Activated T-helper 1 cell treated with anti-CD3 and anti-CD28 coated beads, Interleukin-12 subunit alpha, Interleukin-12 subunit beta, Interleukin-2, Interleukin-4 antibody, amounts not matched to agents 30 ng/mL and 10 ng/mL and 1 ng/mL, durations not matched to agents 14 hours and 24 hours and 36 hours (primary cell): ENCODE measurements at regions of chr2 and their contacts with region 1.

Region 1: DNA sequence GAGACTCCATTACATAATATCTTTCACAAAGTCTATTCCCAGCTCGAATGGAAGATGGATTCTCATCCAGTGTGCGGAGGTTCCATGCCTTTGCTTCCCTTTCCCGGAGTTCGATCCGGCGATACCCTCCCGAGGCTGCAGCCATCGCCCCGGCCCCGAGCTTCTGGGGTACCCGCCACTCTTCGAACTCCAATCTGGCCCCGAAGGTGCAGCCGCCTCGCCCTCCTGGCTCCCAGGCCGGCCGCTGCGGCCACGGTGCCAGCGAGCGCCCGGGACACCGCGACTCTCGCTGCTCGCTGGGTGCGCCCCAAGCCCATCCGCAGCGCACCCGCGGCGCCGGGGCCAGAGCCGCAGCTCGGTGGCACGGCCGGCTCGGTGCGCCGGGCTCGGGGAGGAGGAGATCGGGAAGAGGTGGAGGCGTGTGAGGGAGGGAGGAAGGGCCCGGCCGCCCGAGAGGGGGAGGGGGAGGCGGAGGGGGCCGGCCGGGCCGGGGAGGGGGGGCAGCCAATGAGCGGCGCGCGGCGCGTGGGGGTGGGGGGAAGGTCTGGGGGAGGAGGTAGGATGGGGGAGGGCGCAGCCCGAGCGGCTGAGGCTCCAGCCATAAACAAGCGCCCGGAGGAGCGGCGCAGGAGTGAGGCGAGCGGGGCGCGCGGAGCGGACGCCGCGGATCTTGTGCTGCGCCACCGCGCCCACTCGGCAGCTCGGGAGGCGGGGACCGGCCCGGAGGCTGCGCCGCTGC is at the start of gene CRIM1:
- DNase-seq: peak; percentile 42
- H3K4me3 Mint-ChIP-seq: peak within 1 kb of the TSS; percentile 80
- H3K27ac Mint-ChIP-seq: peak within 1 kb of the TSS; percentile 57
- H3K4me1 Mint-ChIP-seq: peaks cover 44% of the 10 kb centered on the region
- H3K27me3 Mint-ChIP-seq: peaks cover 59% of the 10 kb centered on the region
- total RNA-seq, gene CRIM1: 15.3 and 17.6 TPM in 2 replicates

Region 2: GRCh38 chr2:36147670-36148390 is 207.5 kb before region 1 on chr2:
- intact Hi-C with region 1: loop called (anchors 1 kb)
- DNase-seq: no peak
- H3K4me3 Mint-ChIP-seq: peak overlapping the region; percentile 19
- H3K27ac Mint-ChIP-seq: peak overlapping the region; percentile 49
- H3K4me1 Mint-ChIP-seq: peaks cover 26% of the 10 kb centered on the region
- H3K27me3 Mint-ChIP-seq: peaks cover 17% of the 10 kb centered on the region

Region 3: GRCh38 chr2:36333350-36333972 is 21.9 kb before region 1 on chr2:
- intact Hi-C with region 1: no loop called
- DNase-seq: no peak
- H3K4me3 Mint-ChIP-seq: no peak overlapping the region
- H3K27ac Mint-ChIP-seq: no peak overlapping the region
- H3K4me1 Mint-ChIP-seq: peaks cover 10% of the 10 kb centered on the region
- H3K27me3 Mint-ChIP-seq: peaks cover 13% of the 10 kb centered on the region

Region 4: GRCh38 chr2:36373149-36373926 is 18.0 kb after region 1 on chr2:
- intact Hi-C with region 1: no loop called
- DNase-seq: no peak
- H3K4me3 Mint-ChIP-seq: peak overlapping the region; percentile 6
- H3K27ac Mint-ChIP-seq: no peak overlapping the region
- H3K4me1 Mint-ChIP-seq: peaks cover 39% of the 10 kb centered on the region
- H3K27me3 Mint-ChIP-seq: peaks cover 6% of the 10 kb centered on the region

Region 5: DNA sequence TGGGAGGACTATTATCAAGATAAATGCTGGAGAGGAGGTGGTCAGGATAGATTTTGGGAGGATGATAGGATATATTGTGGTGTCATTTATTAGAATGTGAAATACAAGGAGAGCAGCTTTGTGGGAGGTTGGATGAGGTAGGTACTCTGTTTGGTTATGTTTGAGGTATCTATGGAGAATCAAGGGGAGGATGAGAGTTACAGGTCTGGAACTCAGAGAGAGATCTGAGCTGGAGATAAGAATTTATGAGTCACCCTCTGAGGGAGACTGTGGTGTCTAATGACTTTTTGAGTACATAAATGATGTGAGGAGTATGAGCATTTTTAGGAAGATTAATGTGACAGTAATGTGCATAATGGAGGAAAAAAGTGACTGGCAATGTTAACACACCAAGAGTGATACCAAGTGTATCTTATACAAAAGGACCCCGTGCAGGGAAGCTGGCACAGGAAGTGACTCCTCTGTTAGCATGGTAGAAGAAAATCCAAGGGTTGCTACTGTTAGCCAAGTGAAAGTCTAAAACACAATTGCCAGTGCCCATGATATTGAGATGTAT is 48.4 kb after region 1 on chr2:
- intact Hi-C with region 1: loop called (anchors 5 kb)
- DNase-seq: no peak
- H3K4me3 Mint-ChIP-seq: no peak overlapping the region
- H3K27ac Mint-ChIP-seq: no peak overlapping the region
- H3K4me1 Mint-ChIP-seq: no peaks in the 10 kb centered on the region
- H3K27me3 Mint-ChIP-seq: peaks cover 5% of the 10 kb centered on the region

Region 6: GRCh38 chr2:36507408-36507812 is 152.1 kb after region 1 on chr2:
- intact Hi-C with region 1: loop called (anchors 1 kb)
- DNase-seq: no peak
- H3K4me3 Mint-ChIP-seq: no peak overlapping the region
- H3K27ac Mint-ChIP-seq: no peak overlapping the region
- H3K4me1 Mint-ChIP-seq: no peaks in the 10 kb centered on the region
- H3K27me3 Mint-ChIP-seq: no peaks in the 10 kb centered on the region

Region 7: DNA sequence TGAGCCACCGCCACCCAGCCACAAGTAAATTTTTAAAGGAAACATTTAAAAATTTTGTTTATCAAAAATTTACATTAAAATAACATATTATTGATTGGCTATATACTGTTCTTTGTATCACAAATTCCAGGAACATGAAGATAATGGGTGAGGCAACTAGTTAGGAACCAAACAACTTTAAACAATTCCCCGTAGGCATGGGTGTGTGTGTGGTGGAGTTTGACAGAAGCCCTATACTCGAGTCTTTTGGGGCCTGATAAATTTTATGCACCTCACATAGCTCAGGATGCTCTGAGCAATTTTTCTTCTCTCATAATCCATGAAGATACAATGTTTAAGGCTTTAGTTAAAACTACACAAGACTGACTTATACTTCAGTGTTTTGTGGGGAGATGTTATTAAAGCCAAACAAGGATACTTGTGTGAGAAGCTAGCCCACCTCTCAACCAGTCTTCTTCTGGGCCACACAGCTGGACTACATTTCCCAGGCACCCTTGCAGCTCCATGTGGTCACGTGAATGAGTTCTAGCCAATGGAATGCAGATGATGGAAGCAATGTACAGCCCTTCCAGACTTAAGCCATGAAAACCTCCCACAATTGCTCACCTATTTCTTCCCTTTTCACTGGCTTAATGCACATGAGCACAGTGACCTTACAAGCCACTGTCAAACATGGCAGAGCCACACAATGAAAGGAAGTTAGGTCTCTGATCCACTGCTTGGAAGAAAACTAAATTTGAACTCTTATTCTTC is 262.9 kb after region 1 on chr2:
- intact Hi-C with region 1: no loop called
- DNase-seq: no peak
- H3K4me3 Mint-ChIP-seq: no peak overlapping the region
- H3K27ac Mint-ChIP-seq: no peak overlapping the region
- H3K4me1 Mint-ChIP-seq: no peaks in the 10 kb centered on the region
- H3K27me3 Mint-ChIP-seq: peaks cover 10% of the 10 kb centered on the region

Region 8: GRCh38 chr2:36663851-36664695 is 308.8 kb after region 1 on chr2:
- intact Hi-C with region 1: loop called (anchors 1 kb)
- DNase-seq: no peak
- H3K4me3 Mint-ChIP-seq: no peak overlapping the region
- H3K27ac Mint-ChIP-seq: no peak overlapping the region
- H3K4me1 Mint-ChIP-seq: no peaks in the 10 kb centered on the region
- H3K27me3 Mint-ChIP-seq: peaks cover 5% of the 10 kb centered on the region

Region 9: GRCh38 chr2:36966370-36967235 is 611.3 kb after region 1 on chr2 and contains the start of gene STRN:
- intact Hi-C with region 1: loop called (anchors 2 kb)
- DNase-seq: peak; percentile 99
- H3K4me3 Mint-ChIP-seq: peak within 1 kb of the TSS; percentile 95
- H3K27ac Mint-ChIP-seq: peak within 1 kb of the TSS; percentile 98
- H3K4me1 Mint-ChIP-seq: peaks cover 61% of the 10 kb centered on the region
- H3K27me3 Mint-ChIP-seq: no peaks in the 10 kb centered on the region
- total RNA-seq, gene STRN: 28.8 and 29.0 TPM in 2 replicates